ENCODE measurements at regions of chr1 and their contacts with region 1.

Region 1: GRCh38 chr1:62746085-62746808 is 37.7 kb upstream of the ATG4C start:
- DNase-seq: no peak
- ATAC-seq: peak in 1 of 4 donors; percentile 32
- H3K4me3 ChIP-seq: peak overlapping the region in 3 of 12 donors; percentile 2 to 32 (median 27)
- H3K27ac ChIP-seq: no peak overlapping the region
- H3K4me1 ChIP-seq: peaks cover 0 to 15% (median 1%) of the 10 kb centered on the region in 12 donors
- H3K27me3 ChIP-seq: no peaks in the 10 kb centered on the region
- CTCF ChIP-seq: peak; percentile 35 to 78 (median 68)
- POLR2A ChIP-seq: no peak

Region 2: GRCh38 chr1:62175568-62176179 is 570.6 kb before region 1 on chr1:
- intact Hi-C with region 1: loop called in 2 of 10 experiments (anchors 10 kb)
- DNase-seq: peak in 2 of 5 donors; percentile 18 to 30
- ATAC-seq: peak in 1 of 4 donors; percentile 26
- H3K4me3 ChIP-seq: no peak overlapping the region
- H3K27ac ChIP-seq: no peak overlapping the region
- H3K4me1 ChIP-seq: peaks cover 0 to 6% (median 0%) of the 10 kb centered on the region in 12 donors
- H3K27me3 ChIP-seq: no peaks in the 10 kb centered on the region
- CTCF ChIP-seq: peak; percentile 60 to 87 (median 76)
- POLR2A ChIP-seq: no peak

Region 3: DNA sequence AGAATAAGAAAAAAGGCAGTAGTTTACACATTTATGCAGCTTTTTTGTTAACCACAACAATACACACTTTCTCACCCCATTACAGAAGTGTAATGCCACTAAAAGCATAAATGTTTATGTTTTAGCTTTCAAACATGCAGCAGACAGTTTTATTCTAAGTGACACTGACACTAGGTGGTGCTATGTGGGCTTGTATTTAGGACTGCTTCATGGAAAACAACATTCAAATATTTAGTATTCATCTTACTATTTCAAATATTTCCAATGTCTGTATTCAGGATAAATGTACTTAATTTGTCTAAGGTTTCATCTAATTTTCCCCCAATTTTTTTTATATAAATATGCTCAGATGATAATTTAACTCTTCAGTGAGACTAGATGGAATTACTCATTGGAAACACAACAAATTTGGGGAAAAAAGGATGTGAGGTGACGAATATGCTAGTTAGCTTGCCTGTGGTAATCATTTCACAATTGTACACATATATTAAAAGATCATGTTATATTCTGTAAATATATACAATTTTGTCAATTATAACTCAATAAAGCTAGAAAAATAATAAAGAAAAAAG is 238.0 kb before region 1 on chr1:
- intact Hi-C with region 1: loop called in 9 of 10 experiments (anchors 1 to 5 kb)
- DNase-seq: no peak
- ATAC-seq: no peak
- H3K4me3 ChIP-seq: no peak overlapping the region
- H3K27ac ChIP-seq: no peak overlapping the region
- H3K4me1 ChIP-seq: no peaks in the 10 kb centered on the region
- H3K27me3 ChIP-seq: no peaks in the 10 kb centered on the region
- CTCF ChIP-seq: peak; percentile 39 to 73 (median 54)
- POLR2A ChIP-seq: no peak

Region 4: DNA sequence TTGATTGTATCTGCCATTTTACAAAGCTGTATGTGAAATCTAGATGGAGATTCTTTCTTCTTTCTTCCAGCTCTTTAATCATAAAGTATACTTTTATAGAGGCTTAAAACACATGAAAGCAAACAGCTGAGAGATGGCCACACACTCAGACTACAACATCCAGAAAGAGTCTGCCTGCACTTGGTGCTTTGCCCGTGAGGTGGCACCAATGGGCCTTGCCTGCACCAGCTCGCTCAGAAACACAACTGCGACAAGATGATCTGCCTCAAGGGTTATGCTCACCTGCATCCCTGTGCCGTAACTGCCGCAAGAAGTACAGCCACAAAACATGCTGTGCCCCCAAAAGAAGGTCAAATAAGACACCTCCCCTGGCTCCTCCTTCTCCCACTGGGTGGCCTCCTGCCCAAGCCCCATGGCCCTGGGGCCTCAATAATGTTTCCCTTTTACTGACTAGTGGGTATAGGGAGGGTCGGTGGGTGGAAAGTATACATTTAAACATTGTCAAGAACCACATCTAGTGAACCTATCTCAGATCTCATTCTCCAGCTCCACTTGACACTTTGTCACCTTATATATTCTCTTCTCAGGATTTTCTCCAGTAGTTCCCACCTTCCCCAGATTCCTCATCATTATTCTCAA is 215.6 kb before region 1 on chr1:
- intact Hi-C with region 1: loop called in 8 of 10 experiments (anchors 2 to 10 kb)
- DNase-seq: peak in 4 of 5 donors; percentile 7 to 30 (median 24)
- ATAC-seq: peak in 3 of 4 donors; percentile 58 to 74 (median 59)
- H3K4me3 ChIP-seq: no peak overlapping the region
- H3K27ac ChIP-seq: no peak overlapping the region
- H3K4me1 ChIP-seq: no peaks in the 10 kb centered on the region
- H3K27me3 ChIP-seq: no peaks in the 10 kb centered on the region
- CTCF ChIP-seq: peak; percentile 13 to 63 (median 46)
- POLR2A ChIP-seq: no peak

Region 5: DNA sequence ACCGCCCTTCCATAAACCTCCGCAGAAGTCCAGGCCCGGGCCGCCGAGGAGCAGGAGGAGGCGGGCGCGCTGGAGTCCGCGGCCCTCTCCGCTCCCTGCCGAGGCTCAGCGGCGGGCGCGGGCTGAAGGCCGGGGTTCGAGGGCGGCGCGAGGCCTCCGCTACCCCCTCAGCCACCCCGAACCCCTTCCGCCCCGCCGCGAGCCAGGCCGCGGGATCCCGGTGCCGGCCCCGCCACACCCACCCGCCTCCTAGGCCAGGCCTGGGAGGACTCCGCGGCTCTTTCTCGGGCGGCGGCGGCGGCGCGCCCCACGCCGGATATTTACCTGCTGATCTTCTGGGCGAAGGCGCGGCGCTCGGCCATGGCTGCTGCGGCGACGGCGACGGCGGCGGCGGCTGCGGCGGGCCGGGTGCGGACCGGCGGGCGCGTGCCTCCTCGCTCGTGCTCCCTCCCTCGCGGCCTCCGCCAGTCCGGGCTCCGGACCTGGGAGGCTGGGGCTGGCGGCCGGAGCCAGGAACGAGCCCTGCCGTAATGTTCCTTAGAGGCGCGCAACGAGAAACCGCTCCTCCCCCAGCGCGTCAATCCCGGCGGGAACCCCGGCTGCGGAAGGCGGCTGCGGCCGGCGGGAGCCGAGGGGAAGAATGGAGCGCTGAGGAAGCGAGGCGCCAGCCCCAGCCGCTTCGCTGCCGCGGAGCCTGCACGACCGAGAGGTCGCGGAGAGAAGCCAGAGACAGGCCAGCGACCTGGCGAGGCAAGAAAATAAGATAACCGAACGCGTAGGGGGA is 58.2 kb before region 1 on chr1 and contains the start of gene DOCK7:
- intact Hi-C with region 1: loop called in 1 of 10 experiments (anchors 10 kb)
- DNase-seq: peak; percentile 74 to 89 (median 83)
- ATAC-seq: peak; percentile 63 to 94 (median 88)
- H3K4me3 ChIP-seq: peak within 1 kb of the TSS; percentile 48 to 99 (median 88)
- H3K27ac ChIP-seq: peak within 1 kb of the TSS; percentile 47 to 87 (median 76)
- H3K4me1 ChIP-seq: peaks cover 0 to 55% (median 30%) of the 10 kb centered on the region in 12 donors
- H3K27me3 ChIP-seq: no peaks in the 10 kb centered on the region
- CTCF ChIP-seq: no peak
- POLR2A ChIP-seq: peak in 1 of 2 donors; percentile 26
- total RNA-seq, gene DOCK7: 5.8 to 26.7 (median 12.0) TPM

Region 6: GRCh38 chr1:62823556-62823955 is 77.3 kb after region 1 on chr1:
- intact Hi-C with region 1: no loop called
- DNase-seq: no peak
- ATAC-seq: no peak
- H3K4me3 ChIP-seq: no peak overlapping the region
- H3K27ac ChIP-seq: no peak overlapping the region
- H3K4me1 ChIP-seq: no peaks in the 10 kb centered on the region
- H3K27me3 ChIP-seq: no peaks in the 10 kb centered on the region
- CTCF ChIP-seq: no peak
- POLR2A ChIP-seq: no peak

Measured in heart left ventricle (tissue), 16 donors.